ENCODE measurements at regions of chr4 and their contacts with region 1.

Region 1: GRCh38 chr4:108683479-108683878 is 33.1 kb downstream of the OSTC start:
- DNase-seq: no peak
- ATAC-seq: no peak
- H3K4me3 ChIP-seq: no peak overlapping the region
- H3K27ac ChIP-seq: no peak overlapping the region
- H3K4me1 ChIP-seq: no peaks in the 10 kb centered on the region
- H3K27me3 ChIP-seq: no peaks in the 10 kb centered on the region

Region 2: GRCh38 chr4:107500551-107500950 is 1182.9 kb before region 1 on chr4:
- intact Hi-C with region 1: no loop called
- DNase-seq: no peak
- ATAC-seq: no peak
- H3K4me3 ChIP-seq: no peak overlapping the region
- H3K27ac ChIP-seq: no peak overlapping the region
- H3K4me1 ChIP-seq: no peaks in the 10 kb centered on the region
- H3K27me3 ChIP-seq: no peaks in the 10 kb centered on the region

Region 3: GRCh38 chr4:108611365-108611764 is 72.1 kb before region 1 on chr4:
- intact Hi-C with region 1: no loop called
- DNase-seq: no peak
- ATAC-seq: no peak
- H3K4me3 ChIP-seq: no peak overlapping the region
- H3K27ac ChIP-seq: no peak overlapping the region
- H3K4me1 ChIP-seq: no peaks in the 10 kb centered on the region
- H3K27me3 ChIP-seq: no peaks in the 10 kb centered on the region

Region 4: GRCh38 chr4:108762559-108763225 is 79.2 kb after region 1 on chr4 and contains the start of gene ETNPPL:
- intact Hi-C with region 1: no loop called
- DNase-seq: peak in 1 of 2 donors; percentile 76
- ATAC-seq: peak; percentile 59
- H3K4me3 ChIP-seq: peak within 1 kb of the TSS; percentile 6 to 48
- H3K27ac ChIP-seq: no peak within 1 kb of the TSS
- H3K4me1 ChIP-seq: no peaks in the 10 kb centered on the region
- H3K27me3 ChIP-seq: peaks cover 0 to 2% of the 10 kb centered on the region in 2 donors
- total RNA-seq, gene ETNPPL: not detected

Region 5: DNA sequence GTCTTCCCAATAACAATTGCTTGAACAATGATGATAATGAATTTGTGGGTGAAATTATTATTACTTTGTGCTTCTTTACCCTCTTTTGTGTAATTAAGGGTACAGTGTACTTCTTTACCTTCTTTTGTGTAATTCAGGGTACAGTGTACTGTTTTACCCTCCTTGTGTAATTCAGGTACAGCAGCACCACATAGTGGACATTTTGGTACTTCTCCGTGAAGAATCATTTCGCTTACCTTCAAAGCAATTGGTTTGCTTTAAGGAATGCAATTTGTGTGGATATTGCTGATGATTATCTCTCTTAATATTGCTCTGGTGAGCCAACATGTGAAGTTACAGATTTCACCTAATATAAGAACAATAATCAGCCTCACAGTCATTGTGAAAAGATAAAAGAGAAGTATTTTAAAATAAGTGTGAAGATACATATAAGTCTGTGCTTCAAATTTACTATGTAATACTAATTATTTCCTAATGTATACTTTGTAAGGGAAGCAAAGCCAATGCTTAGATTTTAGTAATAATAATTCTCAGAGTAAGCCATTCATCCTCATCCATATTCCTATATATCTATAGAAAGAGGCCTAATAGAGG is 723.0 kb after region 1 on chr4:
- intact Hi-C with region 1: loop called in 1 of 2 experiments (anchors 5 kb)
- DNase-seq: no peak
- ATAC-seq: peak; percentile 63
- H3K4me3 ChIP-seq: no peak overlapping the region
- H3K27ac ChIP-seq: no peak overlapping the region
- H3K4me1 ChIP-seq: no peaks in the 10 kb centered on the region
- H3K27me3 ChIP-seq: no peaks in the 10 kb centered on the region